Prostate gland (tissue), 2 donors: ENCODE measurements at regions of chr3 and their contacts with region 1.

Region 1: GRCh38 chr3:64267721-64268604 is 42.7 kb upstream of the PRICKLE2 start:
- DNase-seq: peak; percentile 48
- H3K4me3 ChIP-seq: peak overlapping the region; percentile 52 to 55
- H3K27ac ChIP-seq: peak overlapping the region; percentile 74 to 77
- H3K4me1 ChIP-seq: peaks cover 4% of the 10 kb centered on the region
- H3K27me3 ChIP-seq: no peaks in the 10 kb centered on the region
- CTCF ChIP-seq: no peak
- POLR2A ChIP-seq: peak; percentile 38

Region 2: DNA sequence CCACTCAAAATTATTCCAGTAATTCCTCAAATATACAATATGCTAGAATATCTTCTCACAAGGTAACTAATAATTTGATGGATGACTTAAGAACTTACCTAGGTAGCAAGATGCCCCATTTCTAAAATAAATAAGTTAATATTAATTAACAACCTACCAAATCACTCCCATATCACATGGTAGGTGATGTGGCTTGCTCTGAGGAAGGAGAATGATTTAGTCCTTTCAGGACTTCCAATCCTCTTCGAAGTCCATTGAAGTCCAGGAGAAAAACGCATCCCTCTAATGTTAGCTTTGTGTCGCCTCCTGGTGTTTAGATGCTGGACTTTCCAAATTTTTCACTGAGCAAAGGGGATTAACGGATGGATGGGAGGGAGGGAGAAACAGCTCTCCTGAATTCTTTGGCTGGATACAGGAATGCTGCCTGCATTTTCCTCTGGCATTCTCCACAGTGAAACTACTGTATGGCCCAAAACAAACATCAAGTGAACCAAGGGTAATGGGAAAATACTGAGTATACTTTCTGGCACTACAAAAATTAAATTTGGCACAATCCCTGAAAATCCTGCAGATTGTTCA is 101.3 kb before region 1 on chr3:
- intact Hi-C with region 1: loop called (anchors 5 kb)
- DNase-seq: no peak
- H3K4me3 ChIP-seq: no peak overlapping the region
- H3K27ac ChIP-seq: peak overlapping the region; percentile 4 to 40
- H3K4me1 ChIP-seq: peaks cover 8% of the 10 kb centered on the region
- H3K27me3 ChIP-seq: no peaks in the 10 kb centered on the region
- CTCF ChIP-seq: peak in 1 of 4 experiments; percentile 45
- POLR2A ChIP-seq: no peak

Region 3: DNA sequence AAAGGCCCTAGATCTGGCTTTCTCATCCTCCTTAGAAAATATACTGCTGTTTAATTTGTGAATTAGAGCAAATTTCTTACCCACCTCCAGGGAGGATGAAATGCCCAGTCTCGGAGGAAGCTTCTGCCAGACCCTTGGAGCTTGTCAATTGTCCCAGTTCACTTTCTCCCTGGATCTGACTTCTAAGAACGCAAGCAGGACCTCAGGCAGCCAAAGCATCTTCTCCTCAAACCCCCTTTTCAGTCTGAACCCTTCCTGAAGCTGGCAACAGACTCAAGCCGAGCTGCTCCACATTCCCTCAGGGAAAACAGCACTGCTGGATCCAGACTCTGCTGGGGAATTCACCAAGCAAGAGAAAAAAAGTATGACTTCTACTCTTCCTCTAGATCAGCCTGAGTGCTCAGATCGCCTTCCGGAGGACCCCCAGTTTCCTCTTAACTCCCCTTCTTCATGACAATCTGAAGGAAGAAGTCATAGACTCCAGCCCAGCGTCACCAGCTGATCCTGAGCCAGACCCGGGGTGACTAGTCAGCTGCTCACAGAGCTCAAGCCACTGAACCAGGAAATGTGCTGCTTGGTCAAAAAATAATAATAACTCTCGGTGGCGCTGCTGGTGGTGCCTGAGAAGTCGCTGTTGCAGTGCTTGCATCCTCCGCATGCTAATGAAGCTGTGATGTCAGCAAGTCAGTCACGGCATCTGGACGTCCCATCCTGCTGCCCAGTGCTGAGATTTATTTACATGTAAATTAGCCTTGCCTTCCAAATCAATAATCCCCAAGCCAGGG is 42.9 kb before region 1 on chr3 and contains the start of gene PRICKLE2:
- intact Hi-C with region 1: loop called (anchors 5 kb)
- DNase-seq: no peak
- H3K4me3 ChIP-seq: no peak within 1 kb of the TSS
- H3K27ac ChIP-seq: peak within 1 kb of the TSS; percentile 38 to 51
- H3K4me1 ChIP-seq: no peaks in the 10 kb centered on the region
- H3K27me3 ChIP-seq: no peaks in the 10 kb centered on the region
- CTCF ChIP-seq: peak in 1 of 4 experiments; percentile 11
- POLR2A ChIP-seq: no peak
- total RNA-seq, gene PRICKLE2: 11.9 to 21.0 TPM

Region 4: GRCh38 chr3:64345371-64345770 is 77.4 kb after region 1 on chr3:
- intact Hi-C with region 1: loop called (anchors 5 kb)
- DNase-seq: no peak
- H3K4me3 ChIP-seq: no peak overlapping the region
- H3K27ac ChIP-seq: peak overlapping the region in 1 of 2 donors; percentile 38
- H3K4me1 ChIP-seq: no peaks in the 10 kb centered on the region
- H3K27me3 ChIP-seq: no peaks in the 10 kb centered on the region
- CTCF ChIP-seq: no peak
- POLR2A ChIP-seq: no peak